ENCODE measurements at regions of chr2 and their contacts with region 1.

Region 1: GRCh38 chr2:237421542-237422116 is 7.7 kb upstream of the COL6A3 start:
- DNase-seq: peak; percentile 74
- H3K4me3 Mint-ChIP-seq: peak overlapping the region; percentile 9
- H3K27ac Mint-ChIP-seq: no peak overlapping the region
- H3K4me1 Mint-ChIP-seq: peaks cover 5% of the 10 kb centered on the region
- H3K27me3 Mint-ChIP-seq: peaks cover 13% of the 10 kb centered on the region

Region 2: GRCh38 chr2:237364655-237365054 is 57.0 kb before region 1 on chr2:
- CTCF ChIA-PET with region 1: no interaction called
- POLR2A ChIA-PET with region 1: no interaction called
- DNase-seq: no peak
- H3K4me3 Mint-ChIP-seq: no peak overlapping the region
- H3K27ac Mint-ChIP-seq: no peak overlapping the region
- H3K4me1 Mint-ChIP-seq: no peaks in the 10 kb centered on the region
- H3K27me3 Mint-ChIP-seq: no peaks in the 10 kb centered on the region

Region 3: DNA sequence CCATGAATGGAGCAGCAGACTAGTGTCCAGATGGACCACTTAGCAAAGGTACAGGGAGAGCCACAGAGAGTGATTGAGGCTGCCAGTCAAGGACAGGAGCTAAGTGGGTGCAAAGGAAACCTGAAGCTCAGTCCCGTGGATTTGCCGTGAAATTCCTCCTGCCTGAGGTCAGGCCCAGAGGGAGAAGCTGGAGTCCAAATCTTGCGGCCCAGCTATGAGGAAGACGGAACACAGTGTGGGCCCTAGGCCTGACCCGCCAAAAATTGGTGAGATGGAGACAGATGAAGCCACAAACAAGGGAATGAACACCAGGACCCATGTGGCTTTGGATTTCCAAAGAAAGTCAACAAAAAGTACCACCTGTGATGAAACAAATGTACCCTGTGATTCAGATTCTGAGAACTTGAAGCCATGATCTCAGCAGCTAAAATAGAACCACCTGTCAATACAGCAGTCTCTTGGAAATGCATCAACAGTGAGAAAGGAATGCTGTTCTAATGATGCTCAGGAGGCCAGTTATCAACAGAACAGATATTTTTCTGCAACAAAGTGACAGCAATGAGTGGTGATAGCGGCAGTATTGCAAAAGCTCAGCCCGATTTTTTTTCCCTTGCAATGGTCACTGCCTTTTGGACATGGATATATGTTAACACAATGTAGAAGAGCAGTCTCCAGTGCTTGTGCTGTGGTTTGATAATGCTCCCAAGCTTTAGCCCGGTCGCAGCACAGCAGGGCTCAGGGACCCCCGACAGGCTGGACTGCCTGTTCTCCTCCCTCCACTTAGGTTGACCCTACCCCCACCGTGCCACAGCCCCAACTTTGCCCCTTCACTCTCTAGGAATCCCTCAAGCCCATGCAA is 18.4 kb before region 1 on chr2:
- CTCF ChIA-PET with region 1: interaction called, 15 read pairs
- POLR2A ChIA-PET with region 1: no interaction called
- DNase-seq: no peak
- H3K4me3 Mint-ChIP-seq: no peak overlapping the region
- H3K27ac Mint-ChIP-seq: no peak overlapping the region
- H3K4me1 Mint-ChIP-seq: no peaks in the 10 kb centered on the region
- H3K27me3 Mint-ChIP-seq: no peaks in the 10 kb centered on the region

Region 4: DNA sequence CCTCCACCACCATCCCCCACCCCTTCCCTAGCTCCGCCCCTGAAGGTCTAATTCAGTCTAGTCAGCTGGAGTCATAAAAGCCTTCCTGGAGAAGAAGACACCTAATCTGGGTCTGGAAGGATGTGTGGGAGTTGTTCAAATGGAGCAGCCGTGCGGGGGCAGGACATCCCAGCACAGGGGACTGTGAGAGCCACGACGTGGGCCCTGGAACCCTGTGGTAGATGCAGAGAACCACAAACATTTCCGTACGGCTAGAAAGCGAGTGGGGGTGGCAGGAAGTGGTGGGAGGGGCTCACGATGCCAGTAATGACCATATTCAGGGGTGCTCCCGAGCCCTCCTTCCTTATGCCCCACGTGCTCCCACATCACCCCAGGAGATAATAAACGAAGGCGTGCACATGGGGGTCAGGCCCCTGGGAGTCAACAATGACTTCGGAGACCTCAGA is 13.3 kb after region 1 on chr2:
- CTCF ChIA-PET with region 1: interaction called, 36 read pairs
- POLR2A ChIA-PET with region 1: interaction called, 3 read pairs
- DNase-seq: peak; percentile 82
- H3K4me3 Mint-ChIP-seq: no peak overlapping the region
- H3K27ac Mint-ChIP-seq: peak overlapping the region; percentile 22
- H3K4me1 Mint-ChIP-seq: peaks cover 71% of the 10 kb centered on the region
- H3K27me3 Mint-ChIP-seq: peaks cover 11% of the 10 kb centered on the region

Region 5: GRCh38 chr2:237441605-237442274 is 20.1 kb after region 1 on chr2:
- CTCF ChIA-PET with region 1: interaction called, 16 read pairs
- POLR2A ChIA-PET with region 1: interaction called, 4 read pairs
- DNase-seq: no peak
- H3K4me3 Mint-ChIP-seq: no peak overlapping the region
- H3K27ac Mint-ChIP-seq: peak overlapping the region; percentile 11
- H3K4me1 Mint-ChIP-seq: peaks cover 35% of the 10 kb centered on the region
- H3K27me3 Mint-ChIP-seq: peaks cover 2% of the 10 kb centered on the region

Region 6: GRCh38 chr2:237469849-237470248 is 48.2 kb after region 1 on chr2:
- CTCF ChIA-PET with region 1: interaction called, 110 read pairs
- POLR2A ChIA-PET with region 1: interaction called, 5 read pairs
- DNase-seq: no peak
- H3K4me3 Mint-ChIP-seq: no peak overlapping the region
- H3K27ac Mint-ChIP-seq: no peak overlapping the region
- H3K4me1 Mint-ChIP-seq: peaks cover 1% of the 10 kb centered on the region
- H3K27me3 Mint-ChIP-seq: peaks cover 2% of the 10 kb centered on the region

Region 7: DNA sequence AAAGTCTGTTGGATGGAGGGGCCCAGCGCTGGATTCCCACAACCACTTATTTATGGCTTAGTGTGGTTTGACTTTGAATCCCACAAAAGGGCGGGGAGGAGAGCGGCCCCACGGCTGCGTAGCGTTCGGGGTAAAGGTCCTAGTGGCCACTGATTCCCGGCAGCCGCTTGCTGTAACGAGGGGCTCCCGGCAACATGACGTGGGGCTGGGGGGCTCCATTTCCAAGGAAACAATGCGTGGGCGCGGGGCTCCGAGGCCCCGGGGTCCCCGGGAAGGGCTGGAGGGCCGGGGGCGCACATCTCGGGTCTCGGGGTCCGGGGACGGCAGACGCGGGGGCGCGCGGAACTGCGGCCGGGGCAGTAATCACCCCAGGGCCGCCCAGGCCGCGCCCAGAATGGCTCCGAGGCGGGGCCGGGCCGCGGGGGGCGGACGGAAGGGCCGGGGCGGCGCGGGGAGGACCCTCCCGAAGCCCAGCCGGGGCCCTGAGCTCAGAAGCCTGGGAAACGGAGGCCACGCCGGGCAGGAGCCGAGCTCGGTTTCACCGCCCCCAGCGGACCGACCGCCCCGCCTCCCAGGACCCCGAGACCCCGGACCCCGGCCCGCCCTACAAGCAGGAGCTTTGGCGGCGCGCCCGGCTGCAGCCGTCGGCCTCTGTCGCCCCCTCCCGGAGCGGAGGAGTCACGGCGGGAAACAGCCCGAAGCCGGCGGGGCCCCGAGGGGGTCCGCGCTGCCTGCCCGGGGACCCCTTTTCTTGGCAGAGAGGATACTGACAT is 53.5 kb after region 1 on chr2:
- CTCF ChIA-PET with region 1: interaction called, 110 read pairs
- POLR2A ChIA-PET with region 1: interaction called, 5 read pairs
- DNase-seq: peak; percentile 75
- H3K4me3 Mint-ChIP-seq: peak overlapping the region; percentile 72
- H3K27ac Mint-ChIP-seq: peak overlapping the region; percentile 11
- H3K4me1 Mint-ChIP-seq: peaks cover 6% of the 10 kb centered on the region
- H3K27me3 Mint-ChIP-seq: peaks cover 26% of the 10 kb centered on the region

Region 8: GRCh38 chr2:237483040-237483721 is 61.6 kb after region 1 on chr2:
- CTCF ChIA-PET with region 1: interaction called, 110 read pairs
- POLR2A ChIA-PET with region 1: no interaction called
- DNase-seq: no peak
- H3K4me3 Mint-ChIP-seq: no peak overlapping the region
- H3K27ac Mint-ChIP-seq: no peak overlapping the region
- H3K4me1 Mint-ChIP-seq: no peaks in the 10 kb centered on the region
- H3K27me3 Mint-ChIP-seq: peaks cover 56% of the 10 kb centered on the region

Measured in activated CD4-positive, alpha-beta memory T cell treated with anti-CD3 and anti-CD28 coated beads, Interleukin-2, amount 10 ng/mL, durations not matched to agents 7 days and 5 days (primary cell).